ENCODE measurements at regions of chr20 and their contacts with region 1.

Region 1: GRCh38 chr20:17542993-17543412 is 11.8 kb upstream of the BFSP1 start:
- DNase-seq: peak; percentile 86

Region 2: GRCh38 chr20:17327185-17328148 is 215.5 kb before region 1 on chr20:
- in situ Hi-C with region 1: no loop called
- DNase-seq: no peak

Region 3: GRCh38 chr20:17381724-17382123 is 161.3 kb before region 1 on chr20:
- in situ Hi-C with region 1: no loop called
- DNase-seq: no peak

Region 4: GRCh38 chr20:17594443-17594842 is 51.4 kb after region 1 on chr20:
- in situ Hi-C with region 1: loop called (anchors 5 kb)
- DNase-seq: no peak

Region 5: GRCh38 chr20:17654649-17655285 is 111.8 kb after region 1 on chr20:
- in situ Hi-C with region 1: no loop called
- DNase-seq: no peak